ENCODE measurements at regions of chr9 and their contacts with region 1.

Region 1: GRCh38 chr9:19464764-19465585 is 56.2 kb downstream of the ACER2 start:
- DNase-seq: peak; percentile 83
- ATAC-seq: peak; percentile 92
- H3K4me3 ChIP-seq: peak overlapping the region in 3 of 5 experiments; percentile 43 to 75 (median 56)
- H3K4me3 Mint-ChIP-seq: peak overlapping the region; percentile 92
- H3K27ac ChIP-seq: no peak overlapping the region
- H3K27ac Mint-ChIP-seq: peak overlapping the region; percentile 62
- H3K4me1 ChIP-seq: peaks cover 4 to 9% of the 10 kb centered on the region in 2 donors
- H3K4me1 Mint-ChIP-seq: peaks cover 14% of the 10 kb centered on the region
- H3K27me3 ChIP-seq: no peaks in the 10 kb centered on the region
- H3K27me3 Mint-ChIP-seq: no peaks in the 10 kb centered on the region
- CTCF ChIP-seq: peak; percentile 90

Region 2: DNA sequence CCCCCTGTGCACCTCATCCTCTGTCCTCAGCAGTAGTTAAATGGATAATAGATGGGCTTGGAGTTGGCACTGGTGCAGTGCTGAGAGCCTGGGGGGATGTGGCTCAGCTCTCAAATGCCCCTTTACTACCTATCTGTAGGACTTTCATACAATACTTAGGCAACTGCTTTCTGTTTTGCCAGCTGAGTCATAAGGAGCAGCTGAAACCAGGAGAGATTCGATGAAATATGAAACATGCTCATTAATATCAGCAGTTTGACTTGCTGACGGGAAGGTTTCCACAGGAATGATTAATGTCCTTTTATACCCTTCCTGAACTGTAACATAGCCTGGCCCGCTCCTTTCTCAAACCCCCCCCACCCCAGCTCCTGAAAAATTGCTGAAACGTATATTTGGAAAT is 574.6 kb before region 1 on chr9:
- CTCF ChIA-PET with region 1: no interaction called
- POLR2A ChIA-PET with region 1: no interaction called
- intact Hi-C with region 1: no loop called
- DNase-seq: no peak
- ATAC-seq: no peak
- H3K4me3 ChIP-seq: no peak overlapping the region
- H3K4me3 Mint-ChIP-seq: no peak overlapping the region
- H3K27ac ChIP-seq: no peak overlapping the region
- H3K27ac Mint-ChIP-seq: no peak overlapping the region
- H3K4me1 ChIP-seq: no peaks in the 10 kb centered on the region
- H3K4me1 Mint-ChIP-seq: no peaks in the 10 kb centered on the region
- H3K27me3 ChIP-seq: no peaks in the 10 kb centered on the region
- H3K27me3 Mint-ChIP-seq: peaks cover 8% of the 10 kb centered on the region
- CTCF ChIP-seq: no peak

Region 3: DNA sequence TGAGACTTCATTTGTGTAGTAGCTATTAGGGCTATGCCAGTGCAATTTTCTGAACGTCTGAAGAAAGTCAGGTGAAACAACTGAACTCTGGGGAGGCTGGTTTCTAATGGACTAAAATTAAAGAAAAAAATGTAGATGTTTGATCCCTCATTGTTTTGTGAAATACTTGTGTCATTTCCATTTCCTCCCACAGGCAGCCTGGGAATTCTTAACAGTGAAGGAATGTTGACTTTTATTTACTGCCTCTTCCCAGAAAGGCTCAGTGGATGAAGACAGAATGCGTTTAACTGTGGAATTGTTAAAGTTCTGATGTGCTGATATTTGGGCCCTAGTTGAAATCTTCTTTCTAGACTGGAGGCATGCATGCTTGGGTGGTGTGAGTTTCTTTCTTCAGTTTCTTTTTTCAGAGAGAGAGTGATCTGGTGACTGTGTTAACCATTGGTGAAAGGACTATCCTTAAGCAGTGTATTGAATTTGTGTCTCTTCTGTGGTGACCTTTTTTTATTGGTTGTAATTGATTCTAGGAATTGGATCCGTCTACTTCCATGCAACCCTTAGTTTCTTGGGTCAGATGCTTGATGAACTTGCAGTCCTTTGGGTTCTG is 40.7 kb before region 1 on chr9:
- CTCF ChIA-PET with region 1: interaction called, 10 read pairs
- POLR2A ChIA-PET with region 1: no interaction called
- intact Hi-C with region 1: no loop called
- DNase-seq: no peak
- ATAC-seq: no peak
- H3K4me3 ChIP-seq: no peak overlapping the region
- H3K4me3 Mint-ChIP-seq: no peak overlapping the region
- H3K27ac ChIP-seq: no peak overlapping the region
- H3K27ac Mint-ChIP-seq: no peak overlapping the region
- H3K4me1 ChIP-seq: no peaks in the 10 kb centered on the region
- H3K4me1 Mint-ChIP-seq: no peaks in the 10 kb centered on the region
- H3K27me3 ChIP-seq: no peaks in the 10 kb centered on the region
- H3K27me3 Mint-ChIP-seq: no peaks in the 10 kb centered on the region
- CTCF ChIP-seq: no peak

Region 4: DNA sequence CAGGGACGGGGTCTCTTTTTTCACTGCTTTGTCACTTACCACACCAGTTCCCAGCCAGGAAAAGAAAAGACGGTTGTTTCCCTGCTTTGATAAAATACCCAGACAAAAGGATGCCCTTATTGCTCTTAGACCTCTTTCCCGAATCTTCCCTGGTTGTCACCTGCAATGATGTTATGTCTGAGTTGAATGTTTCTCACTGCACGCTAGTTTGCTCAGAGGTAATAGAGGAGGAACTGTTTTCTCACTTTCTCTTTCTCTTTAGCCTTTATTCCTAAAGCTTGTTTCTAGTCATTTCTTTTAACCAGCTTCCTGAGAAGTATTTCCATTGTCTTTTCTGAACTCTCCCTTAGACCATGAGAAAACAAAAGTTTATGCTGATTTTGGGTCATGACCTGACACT is 23.2 kb before region 1 on chr9:
- CTCF ChIA-PET with region 1: interaction called, 10 read pairs
- POLR2A ChIA-PET with region 1: no interaction called
- intact Hi-C with region 1: no loop called
- DNase-seq: peak; percentile 53
- ATAC-seq: peak; percentile 67
- H3K4me3 ChIP-seq: peak overlapping the region; percentile 23 to 63 (median 55)
- H3K4me3 Mint-ChIP-seq: peak overlapping the region; percentile 72
- H3K27ac ChIP-seq: peak overlapping the region; percentile 57 to 81
- H3K27ac Mint-ChIP-seq: peak overlapping the region; percentile 51
- H3K4me1 ChIP-seq: peaks cover 15 to 19% of the 10 kb centered on the region in 2 donors
- H3K4me1 Mint-ChIP-seq: peaks cover 18% of the 10 kb centered on the region
- H3K27me3 ChIP-seq: no peaks in the 10 kb centered on the region
- H3K27me3 Mint-ChIP-seq: no peaks in the 10 kb centered on the region
- CTCF ChIP-seq: no peak

Region 5: GRCh38 chr9:19618816-19619215 is 153.8 kb after region 1 on chr9:
- CTCF ChIA-PET with region 1: no interaction called
- POLR2A ChIA-PET with region 1: no interaction called
- intact Hi-C with region 1: no loop called
- DNase-seq: no peak
- ATAC-seq: no peak
- H3K4me3 ChIP-seq: no peak overlapping the region
- H3K4me3 Mint-ChIP-seq: no peak overlapping the region
- H3K27ac ChIP-seq: no peak overlapping the region
- H3K27ac Mint-ChIP-seq: no peak overlapping the region
- H3K4me1 ChIP-seq: no peaks in the 10 kb centered on the region
- H3K4me1 Mint-ChIP-seq: no peaks in the 10 kb centered on the region
- H3K27me3 ChIP-seq: no peaks in the 10 kb centered on the region
- H3K27me3 Mint-ChIP-seq: no peaks in the 10 kb centered on the region
- CTCF ChIP-seq: no peak

Region 6: DNA sequence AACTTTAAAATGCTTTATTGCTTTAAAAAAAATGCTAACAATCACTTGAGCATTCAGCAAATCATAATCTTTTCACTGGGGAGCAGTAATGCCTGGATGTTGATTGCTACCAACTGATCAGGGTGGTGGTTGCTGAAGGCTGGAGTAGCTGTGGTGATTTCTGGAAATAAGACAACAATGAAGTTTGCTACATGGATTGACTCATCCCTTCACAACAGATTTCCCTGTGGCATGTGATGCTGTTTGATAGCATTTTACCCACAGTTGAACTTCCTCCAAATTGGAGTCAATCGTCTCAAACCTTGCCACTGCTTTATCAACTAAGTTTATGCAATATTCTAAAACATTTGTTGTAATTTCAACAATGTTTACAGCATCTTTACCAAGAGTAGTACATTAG is 1074.0 kb after region 1 on chr9:
- CTCF ChIA-PET with region 1: no interaction called
- POLR2A ChIA-PET with region 1: no interaction called
- intact Hi-C with region 1: no loop called
- DNase-seq: no peak
- ATAC-seq: no peak
- H3K4me3 ChIP-seq: no peak overlapping the region
- H3K4me3 Mint-ChIP-seq: no peak overlapping the region
- H3K27ac ChIP-seq: no peak overlapping the region
- H3K27ac Mint-ChIP-seq: no peak overlapping the region
- H3K4me1 ChIP-seq: no peaks in the 10 kb centered on the region
- H3K4me1 Mint-ChIP-seq: no peaks in the 10 kb centered on the region
- H3K27me3 ChIP-seq: no peaks in the 10 kb centered on the region
- H3K27me3 Mint-ChIP-seq: no peaks in the 10 kb centered on the region
- CTCF ChIP-seq: no peak

Measured in B cell (primary cell).